ENCODE measurements at regions of chr16 and their contacts with region 1.

Region 1: DNA sequence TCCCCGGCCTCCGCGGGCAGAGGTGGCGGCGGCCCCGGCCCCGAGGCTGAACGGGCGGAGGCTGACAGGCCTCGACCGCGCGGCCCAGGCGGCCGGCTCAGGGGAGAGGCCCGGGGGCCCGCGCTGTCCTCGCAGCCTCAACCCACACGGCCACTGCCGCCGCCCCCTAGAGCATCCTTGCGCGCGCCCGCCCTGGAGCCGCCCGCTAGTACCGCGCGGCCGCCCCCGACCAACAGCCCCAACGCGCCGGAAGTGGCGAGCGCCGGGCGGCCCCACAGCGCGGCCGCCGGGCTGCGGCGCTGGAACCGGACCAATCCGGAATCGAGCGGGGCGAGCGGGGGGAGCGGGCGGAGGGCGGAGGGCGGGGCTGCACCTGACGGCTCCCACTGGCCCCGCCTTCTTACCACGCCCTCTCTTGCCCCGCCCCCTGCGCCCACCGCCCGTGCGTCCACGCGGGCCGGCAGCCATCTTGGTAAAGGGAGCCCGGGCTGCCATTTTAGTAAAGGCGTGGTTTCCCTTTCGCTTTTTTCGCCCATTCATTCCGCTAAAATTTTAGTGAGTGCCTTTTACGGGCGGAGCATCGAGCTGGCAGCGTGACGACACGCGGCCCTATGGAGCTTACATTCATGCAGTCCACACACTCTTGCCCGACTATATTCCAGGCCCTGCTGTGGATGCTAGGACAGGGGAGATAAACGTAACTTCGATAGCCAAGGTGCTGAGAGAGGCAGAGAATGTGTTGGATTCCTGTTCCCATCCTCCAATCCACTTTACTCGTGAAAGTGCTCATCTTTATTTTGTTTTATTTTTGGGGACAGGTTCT is at the start of gene XPO6:
- DNase-seq: peak; percentile 99
- H3K4me3 Mint-ChIP-seq: peak within 1 kb of the TSS; percentile 98
- H3K27ac Mint-ChIP-seq: peak within 1 kb of the TSS; percentile 95
- H3K4me1 Mint-ChIP-seq: peaks cover 27% of the 10 kb centered on the region
- H3K27me3 Mint-ChIP-seq: no peaks in the 10 kb centered on the region
- total RNA-seq, gene XPO6: 201 to 214 TPM

Region 2: GRCh38 chr16:28164140-28164539 is 47.8 kb before region 1 on chr16:
- CTCF ChIA-PET with region 1: no interaction called
- POLR2A ChIA-PET with region 1: no interaction called
- intact Hi-C with region 1: no loop called
- DNase-seq: no peak
- H3K4me3 Mint-ChIP-seq: no peak overlapping the region
- H3K27ac Mint-ChIP-seq: peak overlapping the region; percentile 64
- H3K4me1 Mint-ChIP-seq: peaks cover 81% of the 10 kb centered on the region
- H3K27me3 Mint-ChIP-seq: no peaks in the 10 kb centered on the region

Region 3: DNA sequence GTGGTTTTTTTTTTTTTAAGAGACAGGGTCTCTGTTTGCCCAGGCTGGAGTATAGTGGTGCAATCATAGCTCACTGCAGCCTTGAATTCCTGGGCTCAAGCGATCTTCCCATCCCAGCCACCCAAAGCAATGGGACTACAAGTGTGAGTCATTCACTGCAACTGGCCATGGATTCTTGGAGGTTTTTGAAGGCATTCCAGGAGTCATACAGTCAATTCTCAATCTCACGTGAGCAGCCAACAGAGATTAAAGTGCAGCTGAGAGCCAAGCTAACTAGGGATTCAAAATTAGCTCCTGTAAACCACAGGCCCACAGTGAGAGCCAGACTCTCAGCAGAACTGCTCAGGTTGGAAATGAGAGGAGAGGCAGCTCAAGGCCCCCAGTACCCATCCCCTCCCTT is 30.4 kb before region 1 on chr16:
- CTCF ChIA-PET with region 1: no interaction called
- POLR2A ChIA-PET with region 1: interaction called, 29 read pairs
- intact Hi-C with region 1: no loop called
- DNase-seq: peak; percentile 29
- H3K4me3 Mint-ChIP-seq: peak overlapping the region; percentile 21
- H3K27ac Mint-ChIP-seq: peak overlapping the region; percentile 87
- H3K4me1 Mint-ChIP-seq: peaks cover 80% of the 10 kb centered on the region
- H3K27me3 Mint-ChIP-seq: no peaks in the 10 kb centered on the region

Region 4: DNA sequence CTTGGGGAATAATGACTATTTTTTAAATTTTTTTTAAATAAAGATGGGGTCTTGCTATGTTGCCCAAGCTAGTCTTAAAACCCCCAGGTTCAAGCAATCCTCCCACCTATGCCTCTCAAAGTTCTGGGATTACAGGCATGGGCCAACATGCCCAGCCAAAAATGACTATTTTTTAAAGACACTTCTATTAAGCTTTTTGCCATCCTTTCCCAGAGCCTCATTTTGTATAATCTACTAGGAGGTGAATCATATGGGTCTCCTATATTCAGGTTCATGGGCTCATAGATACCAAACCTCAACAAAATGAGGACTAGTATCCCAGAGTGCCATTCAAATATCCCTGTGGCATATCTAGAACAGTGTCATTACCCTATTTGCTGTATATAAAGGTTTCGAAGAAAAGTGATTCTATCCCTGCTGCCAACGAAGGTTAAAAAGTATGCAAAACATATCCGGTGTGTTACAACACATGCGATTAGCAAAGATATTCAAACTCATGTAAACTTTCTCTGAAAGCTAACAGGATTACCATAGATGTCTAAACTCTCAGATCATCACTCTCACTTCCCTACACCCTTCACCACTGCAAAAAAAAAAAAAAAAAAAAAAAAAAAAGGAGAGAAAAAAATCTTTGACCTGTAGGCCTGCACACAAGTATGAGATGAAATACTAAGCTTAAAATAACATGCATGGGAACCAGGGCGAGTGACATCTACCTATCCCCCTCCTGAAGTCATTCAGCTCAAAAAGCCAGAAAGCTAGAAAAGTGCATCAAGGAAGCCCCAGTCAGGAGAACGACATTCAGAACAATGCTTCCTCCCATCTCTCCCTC is 23.6 kb before region 1 on chr16:
- CTCF ChIA-PET with region 1: interaction called, 28 read pairs
- POLR2A ChIA-PET with region 1: interaction called, 35 read pairs
- intact Hi-C with region 1: loop called (anchors 1 kb)
- DNase-seq: no peak
- H3K4me3 Mint-ChIP-seq: peak overlapping the region; percentile 39
- H3K27ac Mint-ChIP-seq: peak overlapping the region; percentile 93
- H3K4me1 Mint-ChIP-seq: peaks cover 94% of the 10 kb centered on the region
- H3K27me3 Mint-ChIP-seq: no peaks in the 10 kb centered on the region

Region 5: DNA sequence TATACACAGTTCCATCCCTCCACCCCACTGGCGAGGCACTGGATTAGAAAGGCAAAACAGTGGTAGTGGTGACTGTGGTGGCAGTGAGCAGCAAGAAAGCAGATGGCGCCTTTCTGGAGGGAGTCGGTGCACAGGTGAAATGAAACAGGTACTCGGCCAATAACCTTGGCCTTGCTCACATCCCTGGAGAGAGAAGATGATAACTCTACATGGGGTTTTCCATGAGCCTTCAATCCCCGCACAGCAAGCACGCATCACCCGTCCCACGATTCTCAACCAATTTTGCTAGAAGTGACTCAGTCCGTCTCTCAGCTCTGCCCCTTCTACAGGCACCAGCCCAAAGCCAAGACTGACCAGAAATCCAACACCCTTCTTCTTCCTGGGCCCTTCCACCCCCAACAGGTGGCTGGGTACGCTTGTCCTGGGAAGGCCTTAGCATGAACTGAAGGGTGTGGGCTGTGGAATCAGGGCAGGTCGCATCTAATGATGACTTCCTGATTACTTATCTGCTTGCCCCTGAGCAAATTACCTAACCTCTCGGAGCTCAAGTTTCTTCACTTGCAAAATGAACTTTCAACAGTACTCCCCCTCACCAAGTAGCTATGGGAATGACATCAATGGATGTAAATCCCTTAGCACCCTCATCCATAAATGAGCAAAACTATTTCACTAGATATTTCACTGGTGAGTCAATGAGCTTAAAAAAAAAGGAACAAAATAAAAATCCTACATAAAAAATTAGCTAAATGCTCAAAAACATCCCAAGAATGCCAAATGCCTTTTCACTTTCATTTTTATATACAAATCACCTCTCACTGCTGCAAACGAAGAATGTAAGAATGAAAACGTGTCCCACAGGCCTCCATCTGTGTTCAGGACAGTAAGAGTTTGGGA is 18.1 kb before region 1 on chr16:
- CTCF ChIA-PET with region 1: interaction called, 28 read pairs
- POLR2A ChIA-PET with region 1: interaction called, 35 read pairs
- intact Hi-C with region 1: loop called (anchors 1 kb)
- DNase-seq: peak; percentile 75
- H3K4me3 Mint-ChIP-seq: peak overlapping the region; percentile 75
- H3K27ac Mint-ChIP-seq: peak overlapping the region; percentile 98
- H3K4me1 Mint-ChIP-seq: peaks cover 85% of the 10 kb centered on the region
- H3K27me3 Mint-ChIP-seq: no peaks in the 10 kb centered on the region

Region 6: DNA sequence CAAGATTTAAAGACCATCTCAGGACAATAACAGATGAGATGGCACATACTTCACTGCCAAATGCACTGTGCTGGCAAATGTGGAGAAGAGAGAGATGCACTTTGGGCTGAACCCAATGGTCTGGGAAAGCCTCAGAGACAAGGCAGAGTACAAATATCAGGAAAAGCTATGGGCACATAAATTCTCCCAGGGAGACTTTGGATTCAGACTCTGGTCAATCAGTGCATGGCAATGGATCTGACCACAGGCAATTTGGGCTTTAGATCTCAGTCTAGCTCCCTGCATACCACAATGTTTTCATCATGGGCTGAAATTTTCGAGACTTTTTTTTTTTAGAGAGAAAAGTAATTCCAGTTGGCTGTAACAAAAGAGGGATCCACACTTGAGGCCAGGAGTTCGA is 19.8 kb after region 1 on chr16:
- CTCF ChIA-PET with region 1: no interaction called
- POLR2A ChIA-PET with region 1: no interaction called
- intact Hi-C with region 1: no loop called
- DNase-seq: no peak
- H3K4me3 Mint-ChIP-seq: no peak overlapping the region
- H3K27ac Mint-ChIP-seq: no peak overlapping the region
- H3K4me1 Mint-ChIP-seq: no peaks in the 10 kb centered on the region
- H3K27me3 Mint-ChIP-seq: peaks cover 1% of the 10 kb centered on the region

Measured in activated CD4-positive, alpha-beta memory T cell treated with anti-CD3 and anti-CD28 coated beads for 36 hours (primary cell).